Activated naive CD4-positive, alpha-beta T cell treated with anti-CD3 and anti-CD28 coated beads for 36 hours (primary cell): ENCODE measurements at regions of chr2 and their contacts with region 1.

Region 1: DNA sequence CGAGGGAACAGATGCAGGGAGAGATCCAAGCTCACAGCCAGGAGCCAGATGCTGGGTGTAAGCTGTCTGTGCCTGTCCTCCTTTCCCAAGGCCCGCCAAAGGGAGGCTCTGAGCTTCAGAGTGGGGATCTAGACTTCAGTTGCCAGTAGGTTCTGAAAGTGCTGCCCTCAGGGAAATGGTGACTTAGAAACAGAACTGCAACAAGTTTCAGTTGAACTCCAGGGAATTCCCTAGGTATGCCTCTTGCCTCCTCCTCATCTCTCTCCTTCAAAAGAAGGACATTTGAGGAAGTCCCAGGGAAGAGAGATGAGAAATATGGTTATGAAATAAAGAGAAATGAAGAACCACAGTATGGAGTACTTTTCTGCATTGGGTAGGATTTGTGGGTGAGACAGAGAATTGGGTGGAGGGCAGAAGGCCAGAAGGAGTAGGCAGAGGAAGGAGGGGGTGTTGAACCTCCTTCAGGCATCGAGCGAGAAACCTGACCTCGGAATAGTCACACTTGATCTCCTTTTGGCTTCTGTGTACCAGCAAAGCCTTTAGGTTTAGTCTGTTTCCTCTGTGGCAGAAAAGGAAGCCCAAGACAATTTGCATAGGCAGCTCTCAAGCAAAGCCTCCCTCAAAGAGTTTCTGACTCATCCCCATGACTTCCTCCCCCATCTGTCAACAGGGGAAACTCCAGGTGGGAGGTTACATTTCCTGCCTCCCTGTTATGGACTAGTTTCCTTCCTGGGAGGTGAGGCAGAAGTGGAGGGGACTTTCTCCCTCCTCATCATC is 45.7 kb downstream of the QPCT start:
- DNase-seq: peak; percentile 87
- H3K4me3 Mint-ChIP-seq: no peak overlapping the region
- H3K27ac Mint-ChIP-seq: peak overlapping the region; percentile 71
- H3K4me1 Mint-ChIP-seq: peaks cover 13% of the 10 kb centered on the region
- H3K27me3 Mint-ChIP-seq: no peaks in the 10 kb centered on the region

Region 2: GRCh38 chr2:37196320-37197195 is 193.6 kb before region 1 on chr2 and contains the start of gene CEBPZOS:
- CTCF ChIA-PET with region 1: no interaction called
- intact Hi-C with region 1: loop called (anchors 1 kb)
- DNase-seq: peak; percentile 93
- H3K4me3 Mint-ChIP-seq: peak within 1 kb of the TSS; percentile 98
- H3K27ac Mint-ChIP-seq: peak within 1 kb of the TSS; percentile 97
- H3K4me1 Mint-ChIP-seq: peaks cover 23% of the 10 kb centered on the region
- H3K27me3 Mint-ChIP-seq: no peaks in the 10 kb centered on the region
- total RNA-seq, gene CEBPZOS: 30.3 to 30.7 TPM

Region 3: DNA sequence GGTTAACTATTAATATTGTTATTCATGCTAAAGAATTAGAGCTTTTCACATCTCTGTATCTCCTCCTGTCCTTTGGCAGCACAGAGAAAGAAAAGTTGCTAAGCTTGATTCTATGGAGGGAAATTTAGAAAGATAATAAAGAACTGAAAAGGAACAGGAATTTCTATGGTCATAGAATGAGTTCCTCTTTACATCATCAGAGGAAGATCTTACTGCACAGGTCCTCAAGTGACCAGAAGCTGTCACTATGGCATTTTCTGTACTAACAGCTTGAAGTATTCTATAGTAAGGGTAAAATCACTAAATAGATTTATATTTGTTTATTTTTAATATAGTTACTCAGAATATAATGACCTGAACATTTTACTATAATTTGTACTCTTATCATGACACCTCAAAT is 59.5 kb before region 1 on chr2:
- CTCF ChIA-PET with region 1: interaction called, 14 read pairs
- intact Hi-C with region 1: no loop called
- DNase-seq: no peak
- H3K4me3 Mint-ChIP-seq: no peak overlapping the region
- H3K27ac Mint-ChIP-seq: no peak overlapping the region
- H3K4me1 Mint-ChIP-seq: peaks cover under 1% of the 10 kb centered on the region
- H3K27me3 Mint-ChIP-seq: peaks cover 14% of the 10 kb centered on the region

Region 4: DNA sequence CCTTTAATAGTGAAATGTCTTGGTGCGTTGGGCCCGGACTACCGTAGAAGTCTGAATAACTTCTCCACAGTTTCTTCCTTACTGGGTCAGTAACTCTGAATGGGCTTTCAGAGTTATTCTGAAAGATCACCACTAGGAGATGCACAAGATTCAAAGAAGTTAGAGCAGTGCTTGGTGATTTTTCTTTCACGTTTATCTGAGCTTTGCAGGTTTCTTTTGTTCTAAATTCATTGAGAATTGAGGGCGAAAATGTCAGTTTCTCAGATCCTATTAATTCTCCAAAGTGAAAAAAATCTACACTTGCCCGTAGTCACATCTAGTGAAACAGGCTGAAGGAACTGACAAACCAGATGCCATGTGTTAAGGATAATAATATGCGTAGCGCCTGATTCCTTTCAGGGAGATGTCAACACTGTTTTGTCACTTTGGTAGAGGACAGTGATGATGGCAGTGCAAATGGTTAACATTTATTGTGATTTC is 24.3 kb after region 1 on chr2:
- CTCF ChIA-PET with region 1: interaction called, 46 read pairs
- intact Hi-C with region 1: no loop called
- DNase-seq: no peak
- H3K4me3 Mint-ChIP-seq: no peak overlapping the region
- H3K27ac Mint-ChIP-seq: no peak overlapping the region
- H3K4me1 Mint-ChIP-seq: peaks cover 3% of the 10 kb centered on the region
- H3K27me3 Mint-ChIP-seq: no peaks in the 10 kb centered on the region

Region 5: GRCh38 chr2:37523814-37524362 is 133.7 kb after region 1 on chr2:
- CTCF ChIA-PET with region 1: no interaction called
- intact Hi-C with region 1: no loop called
- DNase-seq: no peak
- H3K4me3 Mint-ChIP-seq: no peak overlapping the region
- H3K27ac Mint-ChIP-seq: no peak overlapping the region
- H3K4me1 Mint-ChIP-seq: no peaks in the 10 kb centered on the region
- H3K27me3 Mint-ChIP-seq: no peaks in the 10 kb centered on the region

Region 6: GRCh38 chr2:37832590-37833197 is 442.5 kb after region 1 on chr2:
- CTCF ChIA-PET with region 1: interaction called, 10 read pairs
- intact Hi-C with region 1: no loop called
- DNase-seq: peak; percentile 92
- H3K4me3 Mint-ChIP-seq: no peak overlapping the region
- H3K27ac Mint-ChIP-seq: no peak overlapping the region
- H3K4me1 Mint-ChIP-seq: peaks cover 13% of the 10 kb centered on the region
- H3K27me3 Mint-ChIP-seq: no peaks in the 10 kb centered on the region

Region 7: GRCh38 chr2:38076606-38077430 is 686.6 kb after region 1 on chr2:
- CTCF ChIA-PET with region 1: no interaction called
- intact Hi-C with region 1: loop called (anchors 10 kb)
- DNase-seq: peak; percentile 81
- H3K4me3 Mint-ChIP-seq: peak overlapping the region; percentile 75
- H3K27ac Mint-ChIP-seq: peak overlapping the region; percentile 72
- H3K4me1 Mint-ChIP-seq: peaks cover 23% of the 10 kb centered on the region
- H3K27me3 Mint-ChIP-seq: peaks cover 46% of the 10 kb centered on the region

Region 8: DNA sequence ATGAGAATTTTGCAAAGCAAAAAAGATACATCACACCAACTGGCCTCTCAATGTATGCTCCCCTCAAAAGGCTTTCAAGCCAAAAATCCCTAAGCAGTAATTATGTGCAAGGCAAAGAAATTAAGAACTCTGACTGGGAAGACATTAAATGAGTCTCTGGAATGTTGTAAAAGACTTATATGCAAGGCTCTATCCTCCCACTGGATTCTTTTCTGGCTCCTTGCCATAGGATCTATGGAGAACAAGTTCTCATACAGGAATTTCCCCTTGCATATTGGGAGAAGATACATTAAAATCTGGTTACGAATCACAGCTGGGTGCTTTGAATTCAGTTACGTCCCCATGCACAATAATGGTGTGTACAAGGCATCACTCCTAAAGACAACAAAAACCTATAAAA is 1060.3 kb after region 1 on chr2:
- CTCF ChIA-PET with region 1: no interaction called
- intact Hi-C with region 1: no loop called
- DNase-seq: no peak
- H3K4me3 Mint-ChIP-seq: no peak overlapping the region
- H3K27ac Mint-ChIP-seq: no peak overlapping the region
- H3K4me1 Mint-ChIP-seq: no peaks in the 10 kb centered on the region
- H3K27me3 Mint-ChIP-seq: no peaks in the 10 kb centered on the region